Mammary epithelial cell (primary cell): ENCODE measurements at regions of chr10 and their contacts with region 1.

Region 1: DNA sequence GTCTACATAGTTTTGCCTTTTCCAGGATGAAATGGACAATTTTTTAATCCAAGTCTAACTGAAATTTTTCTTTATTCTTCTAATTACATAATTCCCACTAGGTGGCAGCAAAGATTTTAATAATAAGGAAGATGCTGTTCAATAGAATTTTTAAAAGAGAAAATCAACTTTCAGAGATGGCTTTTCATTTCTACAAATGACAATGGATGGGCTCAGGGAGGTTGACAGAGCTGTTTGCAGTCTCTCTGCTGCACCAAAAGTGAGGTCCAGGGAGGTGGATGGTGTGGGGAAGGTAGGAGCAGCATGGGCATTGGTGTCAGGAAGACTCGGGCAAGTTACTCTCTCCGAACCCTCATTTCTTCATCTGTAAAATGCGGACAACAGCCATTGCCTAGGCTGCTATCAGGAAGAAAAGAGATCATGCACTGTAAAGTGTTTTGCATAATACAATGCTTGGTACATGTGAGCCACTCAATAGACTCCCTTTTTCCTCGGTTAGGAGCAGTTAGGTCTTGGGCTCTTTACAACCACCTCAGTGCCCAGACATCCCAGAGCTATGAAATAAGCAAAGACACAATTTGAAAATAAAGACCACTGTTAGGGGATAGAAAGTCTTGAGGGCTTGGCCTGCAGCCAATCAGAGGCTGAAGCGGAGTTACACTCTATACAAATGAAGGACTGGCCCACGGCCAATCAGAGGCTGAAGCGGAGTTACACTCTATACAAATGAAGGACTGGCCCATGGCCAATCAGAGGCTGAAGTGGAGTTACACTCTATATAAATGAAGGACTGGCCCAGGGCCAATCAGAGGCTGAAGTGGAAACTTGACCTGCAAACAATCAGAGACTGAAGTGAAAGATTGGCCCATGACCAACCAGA is 107.1 kb downstream of the ABLIM1 start:
- DNase-seq: no peak
- H3K4me3 ChIP-seq: no peak overlapping the region
- H3K27ac ChIP-seq: no peak overlapping the region
- H3K4me1 ChIP-seq: peaks cover 7% of the 10 kb centered on the region
- H3K27me3 ChIP-seq: no peaks in the 10 kb centered on the region
- CTCF ChIP-seq: peak; percentile 25 to 36

Region 2: DNA sequence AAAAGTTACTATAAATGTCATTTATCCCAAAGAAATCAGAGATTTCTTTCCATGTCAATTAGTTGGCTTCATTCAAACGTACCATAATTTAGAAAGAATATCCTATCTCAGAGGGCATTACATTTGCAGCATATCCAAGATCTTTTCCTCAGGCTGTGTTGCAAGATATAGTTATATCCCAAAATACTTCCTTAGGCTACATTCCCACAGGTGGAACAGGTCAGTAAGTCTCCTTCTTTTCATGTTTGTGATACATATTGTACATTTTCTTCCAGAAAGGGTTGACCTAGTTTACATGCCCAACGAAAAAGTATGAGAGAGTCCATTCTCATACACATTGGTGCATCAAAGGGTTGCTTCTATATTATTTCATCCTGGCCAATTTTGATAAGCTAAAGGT is 338.8 kb before region 1 on chr10:
- CTCF ChIA-PET with region 1: no interaction called
- dilution Hi-C with region 1: no loop called
- in situ Hi-C with region 1: no loop called
- intact Hi-C with region 1: no loop called
- DNase-seq: no peak
- H3K4me3 ChIP-seq: no peak overlapping the region
- H3K27ac ChIP-seq: no peak overlapping the region
- H3K4me1 ChIP-seq: no peaks in the 10 kb centered on the region
- H3K27me3 ChIP-seq: peaks cover 8% of the 10 kb centered on the region
- CTCF ChIP-seq: no peak

Region 3: GRCh38 chr10:114266520-114266919 is 284.5 kb before region 1 on chr10:
- CTCF ChIA-PET with region 1: no interaction called
- dilution Hi-C with region 1: no loop called
- in situ Hi-C with region 1: no loop called
- intact Hi-C with region 1: no loop called
- DNase-seq: peak; percentile 90
- H3K4me3 ChIP-seq: no peak overlapping the region
- H3K27ac ChIP-seq: peak overlapping the region; percentile 72
- H3K4me1 ChIP-seq: peaks cover 37% of the 10 kb centered on the region
- H3K27me3 ChIP-seq: no peaks in the 10 kb centered on the region
- CTCF ChIP-seq: no peak

Region 4: DNA sequence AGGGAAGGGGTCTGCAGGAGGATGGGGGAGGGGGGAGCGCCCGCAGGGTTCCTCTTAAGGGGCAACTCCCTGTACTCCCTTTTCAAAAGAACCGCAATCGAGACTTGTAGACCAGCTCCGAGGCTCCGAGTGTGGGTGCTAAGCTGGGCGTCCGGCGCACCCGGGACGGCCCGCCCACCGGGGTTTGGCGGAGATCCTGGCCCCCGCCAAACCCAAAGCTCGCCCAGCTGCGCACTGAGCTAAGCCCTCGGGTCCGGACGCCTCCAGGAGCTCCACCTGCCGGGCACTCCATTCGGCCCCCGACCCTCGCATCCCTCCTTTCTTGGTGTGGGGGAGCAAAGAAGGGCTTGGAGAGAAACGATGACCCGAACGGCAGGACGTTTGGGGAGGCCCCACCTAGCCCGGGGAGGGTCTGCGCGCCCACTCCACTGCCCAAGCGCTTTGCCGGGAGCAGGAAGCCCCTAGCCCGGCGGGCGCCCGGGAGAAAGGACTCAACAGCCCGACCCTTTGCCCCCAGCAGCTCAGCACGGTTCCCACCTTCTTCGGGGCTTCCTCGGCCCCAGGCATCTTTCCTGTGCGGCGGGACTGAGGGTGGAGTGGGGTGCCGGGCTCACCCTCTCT is 147.3 kb before region 1 on chr10:
- CTCF ChIA-PET with region 1: no interaction called
- dilution Hi-C with region 1: no loop called
- in situ Hi-C with region 1: no loop called
- intact Hi-C with region 1: loop called (anchors 2 kb)
- DNase-seq: peak; percentile 71
- H3K4me3 ChIP-seq: peak overlapping the region; percentile 83 to 88 (median 88)
- H3K27ac ChIP-seq: peak overlapping the region; percentile 79
- H3K4me1 ChIP-seq: peaks cover 51% of the 10 kb centered on the region
- H3K27me3 ChIP-seq: no peaks in the 10 kb centered on the region
- CTCF ChIP-seq: peak; percentile 27 to 59

Region 5: DNA sequence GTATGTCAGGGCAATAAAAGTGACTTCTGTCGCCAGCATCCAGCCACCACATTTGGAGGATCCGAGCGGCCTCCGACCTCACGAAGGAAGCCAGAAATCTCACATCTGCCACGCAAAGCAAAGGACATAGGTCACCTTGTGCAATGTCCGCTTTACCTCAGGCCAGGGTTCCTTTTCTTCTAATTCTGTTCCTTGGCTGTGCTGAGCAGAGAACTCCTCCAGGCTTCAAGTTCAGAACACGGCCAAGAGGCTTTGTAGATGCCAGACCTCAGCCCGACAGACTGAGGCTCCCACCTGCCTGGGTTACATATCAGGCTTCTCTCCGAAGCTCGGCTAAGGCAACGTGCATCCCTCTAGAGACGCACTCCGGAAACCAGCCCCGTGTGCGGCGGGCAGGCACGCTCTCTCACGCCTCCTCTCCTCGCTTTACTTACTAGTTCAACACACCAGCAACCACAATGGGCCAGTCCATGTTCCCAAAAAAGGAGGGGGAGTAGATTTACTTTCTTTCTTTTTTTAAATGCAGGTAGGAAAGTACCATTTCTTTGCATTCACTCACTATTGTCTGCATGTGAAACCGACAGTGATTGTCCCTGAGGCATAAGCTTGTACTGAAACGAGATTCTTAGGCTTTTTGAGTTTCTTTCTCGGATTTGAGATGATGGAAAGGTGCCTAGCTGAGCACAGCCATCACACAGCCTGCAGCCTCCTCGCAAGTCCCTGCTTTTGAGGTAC is 24.3 kb before region 1 on chr10:
- CTCF ChIA-PET with region 1: no interaction called
- dilution Hi-C with region 1: no loop called
- in situ Hi-C with region 1: no loop called
- intact Hi-C with region 1: loop called (anchors 1 kb)
- DNase-seq: peak; percentile 91
- H3K4me3 ChIP-seq: peak overlapping the region; percentile 61 to 88 (median 64)
- H3K27ac ChIP-seq: peak overlapping the region; percentile 96
- H3K4me1 ChIP-seq: peaks cover 15% of the 10 kb centered on the region
- H3K27me3 ChIP-seq: no peaks in the 10 kb centered on the region
- CTCF ChIP-seq: no peak

Region 6: DNA sequence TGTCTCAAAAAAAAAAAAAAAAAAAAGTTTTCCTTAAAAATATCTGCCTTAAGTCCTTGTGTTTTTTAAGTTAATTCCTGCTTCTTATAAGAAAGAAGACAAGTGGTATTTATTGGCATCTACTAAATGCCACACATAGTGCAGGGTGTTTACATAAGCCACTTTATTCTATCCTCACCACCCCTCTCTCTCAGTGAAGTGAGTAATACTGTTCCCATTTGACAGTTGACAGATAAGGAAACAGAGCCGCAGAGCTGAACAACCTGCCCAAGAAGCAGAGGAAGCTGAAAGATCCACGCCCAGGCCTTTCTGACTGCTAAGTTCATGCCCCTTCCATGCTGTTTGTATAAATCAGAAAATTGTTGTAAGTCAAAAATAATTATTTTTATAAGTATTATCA is 53.0 kb after region 1 on chr10:
- CTCF ChIA-PET with region 1: no interaction called
- dilution Hi-C with region 1: no loop called
- in situ Hi-C with region 1: no loop called
- intact Hi-C with region 1: no loop called
- DNase-seq: no peak
- H3K4me3 ChIP-seq: no peak overlapping the region
- H3K27ac ChIP-seq: no peak overlapping the region
- H3K4me1 ChIP-seq: peaks cover 6% of the 10 kb centered on the region
- H3K27me3 ChIP-seq: no peaks in the 10 kb centered on the region
- CTCF ChIP-seq: no peak

Region 7: GRCh38 chr10:114694752-114695151 is 143.8 kb after region 1 on chr10:
- CTCF ChIA-PET with region 1: no interaction called
- dilution Hi-C with region 1: loop called (anchors 10 kb)
- in situ Hi-C with region 1: loop called (anchors 5 kb)
- intact Hi-C with region 1: loop called (anchors 2 kb)
- DNase-seq: no peak
- H3K4me3 ChIP-seq: no peak overlapping the region
- H3K27ac ChIP-seq: no peak overlapping the region
- H3K4me1 ChIP-seq: peaks cover 25% of the 10 kb centered on the region
- H3K27me3 ChIP-seq: no peaks in the 10 kb centered on the region
- CTCF ChIP-seq: peak; percentile 52 to 66

Region 8: GRCh38 chr10:114779803-114780609 is 229.0 kb after region 1 on chr10:
- CTCF ChIA-PET with region 1: no interaction called
- dilution Hi-C with region 1: no loop called
- in situ Hi-C with region 1: loop called (anchors 5 to 10 kb)
- intact Hi-C with region 1: no loop called
- DNase-seq: peak; percentile 83
- H3K4me3 ChIP-seq: no peak overlapping the region
- H3K27ac ChIP-seq: peak overlapping the region; percentile 75
- H3K4me1 ChIP-seq: peaks cover 24% of the 10 kb centered on the region
- H3K27me3 ChIP-seq: no peaks in the 10 kb centered on the region
- CTCF ChIP-seq: no peak